Lower leg skin (tissue), 4 donors: ENCODE measurements at regions of chr9 and their contacts with region 1.

Region 1: DNA sequence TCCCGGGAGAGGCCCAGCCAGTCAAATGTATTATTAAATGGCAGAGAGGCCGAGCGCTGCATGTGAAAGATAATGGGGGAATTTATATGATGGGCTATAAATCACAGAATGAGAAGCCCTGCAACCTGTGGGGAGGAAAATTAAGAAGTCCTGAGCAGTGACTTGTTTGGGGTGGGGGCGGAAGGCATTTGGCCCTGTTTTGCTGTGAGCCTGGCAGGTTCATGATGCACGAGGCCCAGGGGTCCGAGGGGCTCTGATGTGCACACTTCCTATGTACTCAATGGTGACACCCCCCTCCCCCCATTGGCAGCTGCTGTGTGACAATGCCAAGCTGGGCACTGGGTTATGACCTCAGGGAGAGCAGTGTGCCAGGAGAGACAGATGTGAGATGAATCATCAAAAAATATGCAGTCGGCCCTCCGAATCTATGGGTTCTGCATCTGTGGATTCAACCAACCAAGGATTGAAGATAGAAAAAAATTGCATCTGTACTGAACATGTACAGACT is 13.7 kb upstream of the DAB2IP start:
- DNase-seq: no peak
- H3K4me3 ChIP-seq: no peak overlapping the region
- CTCF ChIP-seq: no peak
- POLR2A ChIP-seq: no peak

Region 2: GRCh38 chr9:121009650-121010049 is 628.1 kb before region 1 on chr9:
- intact Hi-C with region 1: no loop called
- DNase-seq: no peak
- H3K4me3 ChIP-seq: no peak overlapping the region
- CTCF ChIP-seq: no peak
- POLR2A ChIP-seq: no peak

Region 3: GRCh38 chr9:121598965-121599871 is 38.5 kb before region 1 on chr9:
- intact Hi-C with region 1: loop called (anchors 2 kb)
- DNase-seq: peak in 1 of 2 donors; percentile 90
- H3K4me3 ChIP-seq: peak overlapping the region; percentile 46
- CTCF ChIP-seq: no peak
- POLR2A ChIP-seq: no peak